ENCODE measurements at regions of chr7 and their contacts with region 1.

Region 1: GRCh38 chr7:127347567-127348246 is 44.8 kb downstream of the ZNF800 start:
- DNase-seq: peak; percentile 81
- H3K4me3 Mint-ChIP-seq: peak overlapping the region; percentile 43
- H3K27ac Mint-ChIP-seq: no peak overlapping the region
- H3K4me1 Mint-ChIP-seq: peaks cover 22% of the 10 kb centered on the region
- H3K27me3 Mint-ChIP-seq: no peaks in the 10 kb centered on the region

Region 2: GRCh38 chr7:127146746-127147536 is 200.8 kb before region 1 on chr7:
- CTCF ChIA-PET with region 1: no interaction called
- POLR2A ChIA-PET with region 1: no interaction called
- intact Hi-C with region 1: no loop called
- DNase-seq: no peak
- H3K4me3 Mint-ChIP-seq: no peak overlapping the region
- H3K27ac Mint-ChIP-seq: no peak overlapping the region
- H3K4me1 Mint-ChIP-seq: no peaks in the 10 kb centered on the region
- H3K27me3 Mint-ChIP-seq: peaks cover 2% of the 10 kb centered on the region

Region 3: GRCh38 chr7:127304087-127304486 is 43.6 kb before region 1 on chr7:
- CTCF ChIA-PET with region 1: no interaction called
- POLR2A ChIA-PET with region 1: no interaction called
- intact Hi-C with region 1: no loop called
- DNase-seq: no peak
- H3K4me3 Mint-ChIP-seq: no peak overlapping the region
- H3K27ac Mint-ChIP-seq: no peak overlapping the region
- H3K4me1 Mint-ChIP-seq: no peaks in the 10 kb centered on the region
- H3K27me3 Mint-ChIP-seq: peaks cover 3% of the 10 kb centered on the region

Region 4: DNA sequence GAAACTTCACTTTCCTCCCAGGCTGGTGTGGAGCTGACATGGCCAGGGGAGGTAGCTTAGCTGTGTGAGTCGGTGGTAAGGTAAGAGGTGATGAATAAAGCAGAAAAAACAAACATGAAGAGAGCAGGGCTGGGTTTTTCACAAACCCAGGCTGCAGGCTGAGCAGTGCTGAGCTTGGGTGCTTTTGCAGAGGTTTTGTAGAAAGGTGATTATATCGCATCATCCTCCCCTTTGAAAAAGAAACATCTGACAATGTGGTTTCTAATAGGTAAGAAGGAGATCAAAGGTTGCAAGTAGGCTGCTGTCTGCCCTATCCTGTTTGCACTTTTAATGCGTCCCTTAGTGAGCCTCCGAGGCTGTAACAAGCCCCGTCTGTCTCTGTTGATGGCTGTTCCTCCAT is 25.4 kb before region 1 on chr7:
- CTCF ChIA-PET with region 1: interaction called, 21 read pairs
- POLR2A ChIA-PET with region 1: no interaction called
- intact Hi-C with region 1: loop called (anchors 2 kb)
- DNase-seq: peak; percentile 48
- H3K4me3 Mint-ChIP-seq: no peak overlapping the region
- H3K27ac Mint-ChIP-seq: peak overlapping the region; percentile 43
- H3K4me1 Mint-ChIP-seq: peaks cover 20% of the 10 kb centered on the region
- H3K27me3 Mint-ChIP-seq: no peaks in the 10 kb centered on the region

Region 5: GRCh38 chr7:127375631-127376030 is 27.9 kb after region 1 on chr7:
- CTCF ChIA-PET with region 1: interaction called, 10 read pairs
- POLR2A ChIA-PET with region 1: no interaction called
- intact Hi-C with region 1: loop called (anchors 2 kb)
- DNase-seq: no peak
- H3K4me3 Mint-ChIP-seq: no peak overlapping the region
- H3K27ac Mint-ChIP-seq: no peak overlapping the region
- H3K4me1 Mint-ChIP-seq: peaks cover 56% of the 10 kb centered on the region
- H3K27me3 Mint-ChIP-seq: no peaks in the 10 kb centered on the region

Region 6: GRCh38 chr7:127447326-127447945 is 99.7 kb after region 1 on chr7:
- CTCF ChIA-PET with region 1: interaction called, 41 read pairs
- POLR2A ChIA-PET with region 1: no interaction called
- intact Hi-C with region 1: loop called (anchors 1 kb)
- DNase-seq: peak; percentile 52
- H3K4me3 Mint-ChIP-seq: no peak overlapping the region
- H3K27ac Mint-ChIP-seq: no peak overlapping the region
- H3K4me1 Mint-ChIP-seq: peaks cover 11% of the 10 kb centered on the region
- H3K27me3 Mint-ChIP-seq: peaks cover 7% of the 10 kb centered on the region

Region 7: GRCh38 chr7:127585044-127585953 is 237.6 kb after region 1 on chr7 and contains the start of gene GCC1:
- CTCF ChIA-PET with region 1: interaction called, 3 read pairs
- POLR2A ChIA-PET with region 1: no interaction called
- intact Hi-C with region 1: loop called (anchors 10 kb)
- DNase-seq: peak; percentile 96
- H3K4me3 Mint-ChIP-seq: peak within 1 kb of the TSS; percentile 88
- H3K27ac Mint-ChIP-seq: peak within 1 kb of the TSS; percentile 64
- H3K4me1 Mint-ChIP-seq: peaks cover 69% of the 10 kb centered on the region
- H3K27me3 Mint-ChIP-seq: no peaks in the 10 kb centered on the region
- total RNA-seq, gene GCC1: 14.1 to 15.0 TPM

Region 8: DNA sequence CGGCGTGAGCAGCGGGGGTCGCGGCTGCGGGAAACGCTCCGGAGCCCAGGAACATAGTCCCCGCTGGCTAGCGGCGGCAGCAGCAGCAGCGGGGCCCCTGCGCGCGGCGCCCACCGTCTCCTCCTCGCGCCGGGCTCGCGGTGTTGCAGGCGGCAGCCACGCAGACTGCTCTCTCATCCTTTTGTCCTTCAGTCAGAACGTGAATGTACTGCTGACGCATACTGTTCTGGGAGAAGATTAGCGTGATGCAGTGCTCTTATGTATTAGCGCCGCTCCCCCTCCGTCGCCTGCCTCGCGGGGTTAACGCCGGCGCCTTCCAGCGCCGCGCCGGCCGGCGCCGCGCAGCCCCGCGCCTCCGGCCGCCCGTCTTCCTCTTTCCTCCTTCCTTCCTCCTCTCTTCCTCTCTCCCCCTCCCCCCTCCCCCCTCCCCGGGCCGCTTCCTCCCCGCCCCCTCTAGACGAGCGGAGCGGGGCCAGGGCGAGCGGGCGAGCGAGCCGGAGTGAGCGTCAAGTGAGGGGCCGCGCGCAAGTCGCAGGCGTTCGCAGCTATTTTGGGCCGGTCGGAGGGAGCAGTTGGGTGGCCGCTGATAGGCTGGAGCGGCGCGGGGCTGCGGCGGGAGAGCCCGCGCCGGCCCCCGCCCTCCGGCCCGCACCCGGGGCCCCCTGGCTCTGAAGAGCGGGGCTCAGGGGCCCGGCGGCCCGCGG is 684.3 kb after region 1 on chr7:
- CTCF ChIA-PET with region 1: no interaction called
- POLR2A ChIA-PET with region 1: no interaction called
- intact Hi-C with region 1: loop called (anchors 5 kb)
- DNase-seq: peak; percentile 76
- H3K4me3 Mint-ChIP-seq: peak overlapping the region; percentile 72
- H3K27ac Mint-ChIP-seq: no peak overlapping the region
- H3K4me1 Mint-ChIP-seq: peaks cover 17% of the 10 kb centered on the region
- H3K27me3 Mint-ChIP-seq: no peaks in the 10 kb centered on the region